ENCODE measurements at regions of chr2 and their contacts with region 1.

Region 1: DNA sequence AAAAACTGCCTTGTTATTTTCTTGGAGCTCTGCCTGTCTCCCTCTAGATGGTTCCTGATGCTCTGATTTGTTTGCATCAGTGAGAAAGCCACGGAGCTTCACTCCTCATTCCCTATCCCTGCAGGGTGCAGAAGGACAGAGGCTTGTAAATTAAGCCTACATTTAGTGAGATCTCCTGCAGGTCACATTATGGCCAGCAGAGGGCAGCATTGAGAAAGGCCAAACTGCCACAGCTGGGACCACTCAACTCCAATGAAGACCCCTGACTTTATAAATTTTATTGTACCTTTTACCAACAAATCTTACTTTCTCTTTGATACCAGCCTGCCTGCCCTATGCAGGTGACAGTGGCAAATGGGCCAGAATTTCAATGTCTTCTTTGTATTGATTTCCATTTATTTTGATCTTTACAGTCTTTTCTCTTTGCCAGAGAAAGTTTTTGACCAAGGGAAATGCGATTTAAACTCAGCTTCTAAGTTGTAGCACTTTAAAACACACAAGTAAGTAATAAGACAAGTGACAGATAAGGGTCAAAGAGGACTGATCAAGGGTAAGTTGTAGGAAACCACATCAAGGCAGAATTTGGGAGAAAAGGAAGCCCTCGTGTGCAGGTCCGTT is 1029.1 kb upstream of the KLHL29 start:
- DNase-seq: peak; percentile 29
- CTCF ChIP-seq: peak; percentile 88

Region 2: GRCh38 chr2:22340716-22341115 is 15.2 kb before region 1 on chr2:
- CTCF ChIA-PET with region 1: interaction called, 13 read pairs
- POLR2A ChIA-PET with region 1: no interaction called
- DNase-seq: no peak
- CTCF ChIP-seq: no peak

Region 3: GRCh38 chr2:22375096-22375495 is 19.2 kb after region 1 on chr2:
- CTCF ChIA-PET with region 1: interaction called, 19 read pairs
- POLR2A ChIA-PET with region 1: no interaction called
- DNase-seq: no peak
- CTCF ChIP-seq: no peak

Region 4: GRCh38 chr2:22420076-22420475 is 64.2 kb after region 1 on chr2:
- CTCF ChIA-PET with region 1: no interaction called
- POLR2A ChIA-PET with region 1: no interaction called
- DNase-seq: no peak
- CTCF ChIP-seq: no peak